Activated B cell treated with CpG ODN at 0.5 μM for 24 hours (primary cell): ENCODE measurements at regions of chr10 and their contacts with region 1.

Region 1: GRCh38 chr10:73848821-73849489 is 25.4 kb downstream of the CAMK2G start:
- DNase-seq: peak; percentile 93
- ATAC-seq: peak; percentile 100
- H3K4me3 Mint-ChIP-seq: peak overlapping the region; percentile 52
- H3K27ac Mint-ChIP-seq: peak overlapping the region; percentile 74
- H3K4me1 Mint-ChIP-seq: peaks cover 11% of the 10 kb centered on the region
- H3K27me3 Mint-ChIP-seq: no peaks in the 10 kb centered on the region
- CTCF ChIP-seq: peak; percentile 94

Region 2: DNA sequence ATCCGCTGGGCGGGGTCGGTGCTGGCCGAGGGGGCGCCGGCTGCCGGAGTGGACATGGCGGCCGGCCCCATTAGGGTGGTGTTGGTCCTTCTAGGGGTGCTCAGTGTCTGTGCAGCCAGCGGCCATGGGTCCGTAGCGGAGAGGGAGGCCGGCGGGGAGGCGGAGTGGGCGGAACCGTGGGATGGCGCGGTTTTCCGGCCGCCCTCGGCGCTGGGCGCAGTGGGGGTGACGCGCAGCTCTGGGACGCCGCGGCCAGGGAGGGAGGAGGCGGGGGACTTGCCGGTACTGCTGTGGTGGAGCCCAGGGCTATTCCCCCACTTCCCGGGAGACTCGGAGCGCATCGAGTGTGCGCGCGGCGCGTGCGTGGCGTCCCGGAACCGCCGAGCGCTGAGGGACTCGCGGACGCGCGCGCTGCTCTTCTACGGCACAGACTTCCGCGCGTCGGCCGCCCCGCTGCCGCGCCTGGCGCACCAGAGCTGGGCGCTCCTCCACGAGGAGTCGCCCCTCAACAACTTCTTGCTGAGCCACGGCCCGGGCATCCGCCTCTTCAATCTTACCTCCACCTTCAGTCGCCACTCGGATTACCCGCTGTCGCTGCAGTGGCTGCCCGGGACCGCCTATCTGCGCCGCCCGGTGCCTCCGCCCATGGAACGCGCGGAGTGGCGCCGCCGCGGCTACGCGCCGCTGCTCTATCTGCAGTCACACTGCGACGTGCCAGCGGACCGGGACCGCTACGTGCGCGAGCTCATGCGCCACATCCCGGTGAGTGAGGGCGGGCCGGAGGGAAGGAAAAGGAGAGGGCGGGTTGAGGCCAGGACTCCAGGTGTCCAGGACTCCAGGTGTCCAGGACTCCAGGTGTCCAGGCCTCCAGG is 76.4 kb before region 1 on chr10:
- CTCF ChIA-PET with region 1: interaction called, 5 read pairs
- POLR2A ChIA-PET with region 1: no interaction called
- intact Hi-C with region 1: loop called (anchors 1 kb)
- DNase-seq: peak; percentile 80
- ATAC-seq: peak; percentile 67
- H3K4me3 Mint-ChIP-seq: peak overlapping the region; percentile 91
- H3K27ac Mint-ChIP-seq: peak overlapping the region; percentile 91
- H3K4me1 Mint-ChIP-seq: peaks cover 64% of the 10 kb centered on the region
- H3K27me3 Mint-ChIP-seq: no peaks in the 10 kb centered on the region
- CTCF ChIP-seq: no peak

Region 3: DNA sequence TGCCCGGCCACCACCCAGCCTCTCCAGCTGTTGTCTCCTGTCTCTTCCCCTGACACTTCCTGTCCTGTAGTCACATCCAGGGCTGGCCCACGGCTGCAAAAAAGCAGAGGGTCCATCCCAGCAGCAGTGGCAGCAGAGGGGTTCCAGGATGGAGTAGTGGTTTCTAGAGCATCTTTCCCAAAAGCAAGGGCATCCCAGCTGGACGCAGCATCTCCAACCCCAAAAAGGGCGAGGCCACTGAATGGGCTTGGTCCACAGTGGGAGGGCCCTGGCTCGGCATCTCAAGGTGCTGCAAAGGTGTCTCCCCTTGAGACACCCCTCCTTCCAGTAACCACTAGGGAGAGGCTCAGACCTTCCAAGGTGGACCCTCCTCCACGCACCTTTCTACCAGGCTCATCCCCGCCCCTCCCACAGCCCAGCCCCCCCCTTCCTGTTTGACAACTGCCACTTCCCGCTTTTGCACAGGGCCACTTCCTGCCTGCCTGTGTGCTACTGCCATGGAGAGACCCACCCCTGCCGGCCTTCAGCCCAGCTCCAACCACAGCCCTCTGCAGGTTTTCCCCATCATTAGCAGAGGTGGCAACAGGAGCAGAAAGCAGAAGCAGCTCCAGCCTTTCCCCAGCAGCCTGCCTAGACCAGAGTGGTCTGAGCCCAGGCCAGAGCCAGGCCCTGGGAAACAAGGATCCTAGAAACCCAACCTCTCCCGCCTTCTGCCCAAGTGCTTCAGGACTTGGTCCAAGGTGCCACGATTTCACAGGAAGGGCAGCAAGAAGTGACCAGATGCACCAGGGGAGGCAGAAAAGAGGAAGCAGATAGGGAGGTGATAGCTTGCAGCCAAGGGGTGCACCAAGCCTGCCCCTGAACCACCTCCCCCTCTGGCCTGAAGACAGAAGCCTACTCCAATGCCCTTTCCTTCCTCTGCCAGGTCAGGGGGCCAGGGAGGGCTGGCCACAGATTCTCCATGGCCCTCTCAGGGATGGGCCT is 16.8 kb after region 1 on chr10:
- CTCF ChIA-PET with region 1: interaction called, 3 read pairs
- POLR2A ChIA-PET with region 1: interaction called, 5 read pairs
- intact Hi-C with region 1: loop called (anchors 1 kb)
- DNase-seq: peak; percentile 46
- ATAC-seq: peak; percentile 93
- H3K4me3 Mint-ChIP-seq: peak overlapping the region; percentile 73
- H3K27ac Mint-ChIP-seq: peak overlapping the region; percentile 96
- H3K4me1 Mint-ChIP-seq: peaks cover 46% of the 10 kb centered on the region
- H3K27me3 Mint-ChIP-seq: no peaks in the 10 kb centered on the region
- CTCF ChIP-seq: no peak

Region 4: DNA sequence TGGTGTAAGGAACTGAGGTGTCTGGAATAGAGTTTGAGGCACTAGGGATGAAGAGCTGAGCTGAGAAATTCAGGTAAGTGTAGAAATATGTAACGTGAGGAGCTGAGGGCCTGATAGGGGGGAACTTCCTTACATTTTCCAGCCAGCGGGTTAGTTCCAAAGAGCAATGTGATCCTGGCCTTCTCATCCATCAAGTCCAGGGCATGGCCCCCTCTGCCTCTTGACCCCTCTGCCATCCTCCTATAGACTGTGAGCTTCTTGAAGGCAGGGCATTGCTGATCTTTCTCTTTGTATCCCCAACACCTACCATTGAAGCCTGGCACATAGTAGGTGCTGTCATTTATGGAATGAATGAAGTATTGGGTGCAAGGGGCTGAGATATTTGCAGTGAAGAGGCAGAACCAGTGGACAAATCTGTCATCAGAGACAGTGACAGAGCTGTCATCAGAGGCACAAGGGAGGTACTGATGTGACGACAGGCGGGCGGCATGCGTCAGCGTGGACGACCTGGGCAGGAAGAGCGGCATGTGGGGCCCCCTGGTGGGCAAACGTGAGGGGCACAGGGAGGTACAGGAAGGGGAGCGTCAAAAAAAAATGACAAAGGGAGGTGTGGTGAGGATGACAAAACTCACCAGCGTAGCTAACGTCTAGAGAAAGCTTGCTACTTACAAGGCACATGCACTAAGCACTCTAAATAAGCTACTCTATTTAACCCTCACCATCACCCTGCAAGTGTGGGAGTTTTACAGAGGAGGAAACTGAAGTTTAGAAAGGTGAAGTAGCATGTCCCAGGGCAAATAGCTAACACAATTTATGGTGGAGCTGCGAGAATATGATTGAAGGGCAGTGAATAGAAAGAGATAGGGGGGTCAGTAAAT is 30.6 kb after region 1 on chr10:
- CTCF ChIA-PET with region 1: interaction called, 129 read pairs
- POLR2A ChIA-PET with region 1: interaction called, 25 read pairs
- intact Hi-C with region 1: loop called (anchors 1 kb)
- DNase-seq: peak; percentile 86
- ATAC-seq: peak; percentile 96
- H3K4me3 Mint-ChIP-seq: no peak overlapping the region
- H3K27ac Mint-ChIP-seq: peak overlapping the region; percentile 67
- H3K4me1 Mint-ChIP-seq: peaks cover 22% of the 10 kb centered on the region
- H3K27me3 Mint-ChIP-seq: no peaks in the 10 kb centered on the region
- CTCF ChIP-seq: no peak

Region 5: DNA sequence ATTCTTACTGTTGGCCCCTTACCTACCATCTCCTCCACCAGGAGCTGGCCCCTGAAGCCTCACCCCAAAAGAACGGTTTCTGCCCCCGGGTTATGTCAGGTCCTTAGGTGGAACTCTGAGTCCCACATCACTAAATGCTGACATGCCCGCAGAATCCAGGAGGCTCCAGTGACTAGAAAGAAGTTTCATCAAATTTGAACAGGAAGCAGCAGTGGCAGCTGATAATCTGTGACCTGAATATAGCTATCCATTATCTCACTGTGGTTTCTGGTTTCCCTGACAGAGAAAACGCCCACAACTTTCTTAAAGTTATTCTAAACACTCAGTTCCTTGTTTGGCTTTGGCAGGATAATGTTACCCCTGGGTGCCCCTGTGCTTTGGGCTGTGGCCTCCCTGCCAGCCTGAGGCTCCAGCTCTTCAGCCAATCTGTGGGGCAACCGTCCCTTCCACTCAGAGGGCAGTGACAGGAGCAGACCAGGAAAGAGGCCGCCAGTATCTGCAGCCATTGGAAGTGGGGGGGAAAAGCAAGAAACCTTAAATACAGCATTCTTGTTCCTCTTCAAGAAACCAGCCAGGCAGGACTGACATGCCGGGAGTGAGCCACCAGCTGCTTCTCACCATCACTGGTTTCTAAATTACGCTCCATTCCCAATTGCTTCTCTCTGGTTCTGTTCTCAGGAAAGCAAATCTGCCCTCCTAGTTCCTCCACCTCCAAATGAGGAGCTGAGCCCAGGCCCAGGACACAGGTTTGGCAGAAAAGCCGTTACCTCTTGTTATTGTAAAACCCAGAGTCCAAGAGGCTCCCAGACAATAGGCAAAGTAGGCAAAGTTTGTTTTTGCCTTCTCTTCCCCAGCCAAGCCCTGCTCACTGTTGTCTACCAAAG is 107.8 kb after region 1 on chr10:
- CTCF ChIA-PET with region 1: no interaction called
- POLR2A ChIA-PET with region 1: interaction called, 5 read pairs
- intact Hi-C with region 1: loop called (anchors 1 kb)
- DNase-seq: peak; percentile 36
- ATAC-seq: peak; percentile 58
- H3K4me3 Mint-ChIP-seq: peak overlapping the region; percentile 67
- H3K27ac Mint-ChIP-seq: peak overlapping the region; percentile 95
- H3K4me1 Mint-ChIP-seq: peaks cover 55% of the 10 kb centered on the region
- H3K27me3 Mint-ChIP-seq: no peaks in the 10 kb centered on the region
- CTCF ChIP-seq: no peak

Region 6: DNA sequence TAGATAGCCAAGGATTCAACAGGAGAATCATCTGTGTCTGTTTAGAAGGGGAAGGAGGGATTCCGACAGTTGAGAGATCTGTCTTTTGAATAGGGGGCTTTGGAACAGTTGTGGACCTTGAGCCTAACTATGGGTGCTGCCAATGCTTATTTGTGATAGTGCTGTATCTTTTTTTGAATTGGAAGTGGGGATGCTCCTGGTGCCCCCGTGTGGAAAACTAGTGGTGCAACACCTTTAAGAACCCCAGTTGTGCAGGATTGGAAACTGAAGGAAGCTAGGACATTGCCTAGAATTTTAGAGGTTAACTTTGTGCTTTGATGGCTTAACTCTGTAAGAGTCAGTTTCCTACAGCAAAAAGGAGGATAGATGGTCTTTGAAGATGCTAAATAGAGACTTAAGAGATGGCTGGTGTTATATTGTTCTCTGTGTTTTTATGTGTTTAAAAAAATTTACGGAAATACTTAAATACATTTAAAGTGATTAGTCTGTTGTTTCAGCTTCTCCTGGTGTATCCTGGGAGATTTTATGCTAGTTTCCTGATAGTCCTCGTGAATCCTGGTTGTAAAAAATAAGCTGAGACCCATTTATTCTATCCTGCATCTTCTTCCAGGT is 232.3 kb after region 1 on chr10:
- CTCF ChIA-PET with region 1: interaction called, 11 read pairs
- POLR2A ChIA-PET with region 1: no interaction called
- intact Hi-C with region 1: loop called (anchors 1 kb)
- DNase-seq: no peak
- ATAC-seq: peak; percentile 51
- H3K4me3 Mint-ChIP-seq: no peak overlapping the region
- H3K27ac Mint-ChIP-seq: no peak overlapping the region
- H3K4me1 Mint-ChIP-seq: peaks cover 44% of the 10 kb centered on the region
- H3K27me3 Mint-ChIP-seq: no peaks in the 10 kb centered on the region
- CTCF ChIP-seq: no peak

Region 7: DNA sequence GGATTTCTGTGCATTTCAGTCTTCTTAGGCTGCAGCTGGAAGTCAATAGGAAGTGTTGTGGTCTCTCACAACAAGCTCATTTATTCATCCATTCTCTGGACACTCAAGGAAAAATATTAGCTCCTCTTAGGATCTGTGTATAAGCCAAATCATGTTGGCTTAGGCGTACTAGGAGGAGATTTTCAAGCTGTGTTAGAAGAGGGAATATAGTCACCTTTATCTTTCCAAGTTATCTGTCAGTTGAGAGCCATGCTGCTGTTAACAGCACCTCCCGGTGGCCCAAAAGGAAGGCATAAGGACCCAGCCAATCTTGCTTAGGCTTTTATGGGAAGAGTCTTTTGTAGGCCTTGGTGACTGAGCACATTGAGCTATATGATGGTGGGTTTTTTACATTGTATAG is 1802.5 kb after region 1 on chr10:
- CTCF ChIA-PET with region 1: no interaction called
- POLR2A ChIA-PET with region 1: no interaction called
- intact Hi-C with region 1: no loop called
- DNase-seq: no peak
- ATAC-seq: no peak
- H3K4me3 Mint-ChIP-seq: no peak overlapping the region
- H3K27ac Mint-ChIP-seq: no peak overlapping the region
- H3K4me1 Mint-ChIP-seq: no peaks in the 10 kb centered on the region
- H3K27me3 Mint-ChIP-seq: peaks cover 3% of the 10 kb centered on the region
- CTCF ChIP-seq: no peak